Cardiac septum (tissue), 1 donor: ENCODE measurements at regions of chr7 and their contacts with region 1.

Region 1: DNA sequence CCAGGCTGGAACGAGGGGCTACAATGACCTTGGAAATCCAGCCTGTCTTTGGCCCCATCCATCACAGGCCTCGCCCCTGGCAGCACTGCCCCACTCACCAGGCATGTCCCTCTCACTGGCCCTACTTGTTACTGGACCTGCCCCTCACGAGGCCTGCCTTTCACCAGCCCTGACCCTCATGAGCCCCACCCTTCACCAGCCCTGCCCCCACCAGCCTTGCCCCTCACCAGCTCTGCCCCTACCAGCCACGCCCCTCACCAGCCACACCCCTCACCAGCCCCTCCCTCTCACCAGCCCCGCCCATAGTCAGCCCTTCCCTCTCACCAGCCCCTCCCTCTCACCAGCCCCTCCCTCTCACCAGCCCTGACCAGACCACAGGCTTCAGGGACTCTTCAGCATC is 57.8 kb downstream of the COL26A1 start:
- DNase-seq: no peak

Region 2: DNA sequence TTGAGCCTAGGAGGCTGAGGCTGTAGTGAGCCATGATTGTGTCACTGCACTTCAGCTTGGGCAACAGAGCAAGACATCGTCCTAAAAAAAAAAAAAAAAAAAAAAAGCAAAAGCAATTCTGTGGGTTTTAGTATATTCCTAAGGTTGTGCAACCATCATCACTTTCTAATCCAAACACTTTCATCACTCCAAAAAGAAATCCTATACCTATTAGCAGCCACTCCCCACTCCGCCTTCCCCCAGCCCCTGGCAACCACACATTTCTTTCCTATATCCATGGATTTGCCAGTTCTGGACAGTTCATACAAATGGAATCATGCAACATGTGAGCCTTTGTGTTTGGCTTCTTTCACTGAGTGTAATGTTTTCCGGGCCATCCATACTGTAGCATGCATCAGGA is 666.7 kb before region 1 on chr7:
- intact Hi-C with region 1: loop called (anchors 10 kb)
- DNase-seq: no peak